ENCODE measurements at regions of chr2 and their contacts with region 1.

Region 1: DNA sequence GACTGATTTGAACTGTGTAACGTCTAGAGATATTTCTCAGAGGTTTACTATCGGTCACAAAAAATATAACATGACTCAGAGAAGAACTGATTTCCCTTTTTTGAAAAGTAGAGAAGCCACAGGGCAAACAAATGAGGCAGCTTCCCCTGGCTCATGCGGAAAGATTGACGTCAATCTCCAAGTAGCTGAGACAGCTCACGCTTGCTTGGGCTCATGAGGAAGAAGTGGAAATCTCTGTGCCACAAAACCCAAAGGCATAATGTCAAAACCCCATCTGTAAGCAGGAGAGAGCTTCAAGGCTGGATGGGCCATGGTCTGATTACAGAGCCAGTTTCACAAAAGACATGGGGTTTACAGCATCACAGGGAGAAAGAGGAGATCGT is 188.1 kb downstream of the ARL4C start:
- DNase-seq: no peak
- H3K4me3 ChIP-seq: no peak overlapping the region
- H3K27ac ChIP-seq: no peak overlapping the region
- H3K4me1 ChIP-seq: peaks cover 26% of the 10 kb centered on the region
- H3K27me3 ChIP-seq: no peaks in the 10 kb centered on the region
- CTCF ChIP-seq: no peak

Region 2: DNA sequence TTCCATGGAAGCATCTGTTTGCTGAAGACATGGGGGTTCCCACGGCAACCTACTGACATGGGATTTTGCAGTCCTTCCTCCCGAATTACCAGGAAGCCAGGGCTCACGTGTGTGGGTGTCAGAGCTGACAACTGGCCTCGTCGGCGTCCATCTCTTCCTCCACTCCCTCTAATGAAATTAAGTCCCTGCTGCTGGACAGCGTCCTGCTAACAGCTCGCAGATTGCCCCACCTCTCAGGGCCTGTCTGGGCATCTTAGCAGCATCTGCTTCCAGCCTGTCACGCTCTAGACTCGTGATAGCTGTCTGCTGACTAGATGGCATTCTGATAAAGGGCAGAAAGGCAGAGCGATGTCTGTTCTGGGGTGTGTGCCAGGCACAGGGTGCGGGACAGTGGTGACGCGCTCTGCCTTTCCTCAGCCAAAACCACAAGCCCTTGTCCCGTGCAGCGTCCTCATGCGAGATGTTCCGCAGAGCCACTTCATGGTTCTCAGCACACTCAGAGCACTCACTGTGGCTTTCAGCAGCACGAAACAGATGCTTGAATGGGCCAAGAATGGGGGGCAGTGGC is 26.9 kb after region 1 on chr2:
- CTCF ChIA-PET with region 1: no interaction called
- dilution Hi-C with region 1: no loop called
- in situ Hi-C with region 1: no loop called
- intact Hi-C with region 1: loop called (anchors 2 kb)
- DNase-seq: peak; percentile 84
- H3K4me3 ChIP-seq: no peak overlapping the region
- H3K27ac ChIP-seq: no peak overlapping the region
- H3K4me1 ChIP-seq: peaks cover 11% of the 10 kb centered on the region
- H3K27me3 ChIP-seq: no peaks in the 10 kb centered on the region
- CTCF ChIP-seq: no peak

Region 3: GRCh38 chr2:234368861-234369261 is 60.1 kb after region 1 on chr2:
- CTCF ChIA-PET with region 1: no interaction called
- dilution Hi-C with region 1: loop called (anchors 5 kb)
- in situ Hi-C with region 1: no loop called
- intact Hi-C with region 1: no loop called
- DNase-seq: peak; percentile 82
- H3K4me3 ChIP-seq: no peak overlapping the region
- H3K27ac ChIP-seq: peak overlapping the region; percentile 15
- H3K4me1 ChIP-seq: peaks cover 41% of the 10 kb centered on the region
- H3K27me3 ChIP-seq: no peaks in the 10 kb centered on the region
- CTCF ChIP-seq: peak; percentile 2 to 24